ENCODE measurements at regions of chr1 and their contacts with region 1.

Region 1: DNA sequence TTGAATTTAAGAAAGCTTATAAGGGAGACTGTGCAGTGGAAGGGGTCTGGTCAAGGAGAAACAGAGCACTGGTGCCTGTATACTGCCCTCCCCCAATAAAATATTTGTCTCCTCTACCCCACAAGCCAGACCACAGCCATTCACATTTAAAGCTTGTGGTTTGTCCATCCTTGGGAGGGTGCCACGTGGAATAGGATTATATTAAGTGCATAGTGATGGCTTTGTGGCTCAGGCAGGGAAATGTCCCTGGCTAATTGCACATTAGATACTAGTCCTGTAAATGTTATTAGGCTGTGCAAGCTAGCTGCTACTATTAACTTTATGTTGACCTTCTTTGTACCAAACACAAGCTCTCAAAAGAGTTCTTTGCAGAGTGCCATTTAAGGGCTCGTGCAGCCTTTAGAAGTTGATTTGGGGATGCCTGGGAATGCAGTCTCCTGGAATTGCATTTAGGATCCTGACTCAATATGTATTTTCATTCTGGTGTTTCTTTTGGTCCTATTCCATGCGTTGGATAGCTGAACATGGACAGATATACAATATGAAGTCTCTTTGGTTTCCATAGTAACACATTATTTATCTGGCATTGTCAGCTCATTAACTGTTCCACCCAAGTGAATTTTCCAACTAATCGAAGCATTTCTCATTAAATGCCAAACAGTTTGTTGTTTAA is 210.6 kb downstream of the ROR1 start:
- DNase-seq: no peak
- H3K4me3 ChIP-seq: no peak overlapping the region
- H3K27ac ChIP-seq: peak overlapping the region; percentile 48 to 62
- H3K4me1 ChIP-seq: peaks cover 0 to 56% (median 22%) of the 10 kb centered on the region in 4 donors
- H3K27me3 ChIP-seq: no peaks in the 10 kb centered on the region
- CTCF ChIP-seq: no peak

Region 2: DNA sequence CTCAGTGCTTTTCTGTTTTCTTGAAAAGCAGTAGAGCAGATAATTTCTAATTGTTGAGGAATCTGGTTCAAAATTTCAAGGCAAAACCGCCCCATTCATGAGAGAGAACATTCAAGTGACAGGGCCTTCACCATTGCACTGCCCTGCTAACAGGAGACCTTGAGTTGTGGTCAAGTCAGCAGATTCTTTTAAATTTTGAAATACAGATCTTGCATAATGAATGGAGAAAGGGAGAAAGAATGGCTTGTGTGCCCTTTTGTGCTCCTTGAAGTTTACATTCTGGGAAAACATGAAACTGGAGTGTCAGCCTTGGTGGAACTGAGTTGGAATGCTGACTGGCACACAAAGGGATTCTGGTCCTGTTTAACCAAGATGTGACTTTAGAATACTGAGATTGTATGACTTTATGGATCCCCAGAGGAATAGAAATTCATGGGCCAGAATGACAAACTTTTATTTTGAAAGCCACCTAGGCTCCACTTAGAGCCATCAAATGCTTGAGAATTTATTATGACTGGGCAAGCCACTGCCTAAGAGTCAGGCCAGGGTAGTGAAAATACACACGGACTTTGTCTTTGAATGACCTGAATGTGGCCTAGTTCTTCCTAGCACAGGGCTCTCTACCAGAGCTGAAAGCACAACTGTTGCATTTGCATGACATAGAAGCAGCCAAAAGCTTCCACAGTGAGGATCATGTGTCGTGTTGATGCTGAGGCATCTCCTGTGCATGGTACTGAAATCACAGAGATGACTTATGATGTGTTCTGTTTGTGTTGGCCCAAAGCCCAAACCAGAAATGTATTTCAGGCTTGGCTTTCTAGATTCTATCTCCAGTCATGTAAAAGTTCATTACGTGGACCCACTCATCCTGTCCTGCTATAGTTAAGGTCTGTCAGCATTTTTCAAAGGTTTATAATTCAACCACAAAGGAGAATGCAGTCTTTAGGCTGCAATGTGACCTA is 54.9 kb after region 1 on chr1:
- intact Hi-C with region 1: loop called (anchors 5 kb)
- DNase-seq: peak; percentile 79 to 82
- H3K4me3 ChIP-seq: no peak overlapping the region
- H3K27ac ChIP-seq: peak overlapping the region; percentile 76 to 83
- H3K4me1 ChIP-seq: peaks cover 0 to 98% (median 60%) of the 10 kb centered on the region in 4 donors
- H3K27me3 ChIP-seq: no peaks in the 10 kb centered on the region
- CTCF ChIP-seq: peak in 1 of 2 experiments; percentile 5

Region 3: GRCh38 chr1:64062941-64063581 is 78.7 kb after region 1 on chr1:
- intact Hi-C with region 1: no loop called
- DNase-seq: no peak
- H3K4me3 ChIP-seq: no peak overlapping the region
- H3K27ac ChIP-seq: no peak overlapping the region
- H3K4me1 ChIP-seq: peaks cover 0 to 26% (median 7%) of the 10 kb centered on the region in 4 donors
- H3K27me3 ChIP-seq: no peaks in the 10 kb centered on the region
- CTCF ChIP-seq: no peak